ENCODE measurements at regions of chr1 and their contacts with region 1.

Region 1: DNA sequence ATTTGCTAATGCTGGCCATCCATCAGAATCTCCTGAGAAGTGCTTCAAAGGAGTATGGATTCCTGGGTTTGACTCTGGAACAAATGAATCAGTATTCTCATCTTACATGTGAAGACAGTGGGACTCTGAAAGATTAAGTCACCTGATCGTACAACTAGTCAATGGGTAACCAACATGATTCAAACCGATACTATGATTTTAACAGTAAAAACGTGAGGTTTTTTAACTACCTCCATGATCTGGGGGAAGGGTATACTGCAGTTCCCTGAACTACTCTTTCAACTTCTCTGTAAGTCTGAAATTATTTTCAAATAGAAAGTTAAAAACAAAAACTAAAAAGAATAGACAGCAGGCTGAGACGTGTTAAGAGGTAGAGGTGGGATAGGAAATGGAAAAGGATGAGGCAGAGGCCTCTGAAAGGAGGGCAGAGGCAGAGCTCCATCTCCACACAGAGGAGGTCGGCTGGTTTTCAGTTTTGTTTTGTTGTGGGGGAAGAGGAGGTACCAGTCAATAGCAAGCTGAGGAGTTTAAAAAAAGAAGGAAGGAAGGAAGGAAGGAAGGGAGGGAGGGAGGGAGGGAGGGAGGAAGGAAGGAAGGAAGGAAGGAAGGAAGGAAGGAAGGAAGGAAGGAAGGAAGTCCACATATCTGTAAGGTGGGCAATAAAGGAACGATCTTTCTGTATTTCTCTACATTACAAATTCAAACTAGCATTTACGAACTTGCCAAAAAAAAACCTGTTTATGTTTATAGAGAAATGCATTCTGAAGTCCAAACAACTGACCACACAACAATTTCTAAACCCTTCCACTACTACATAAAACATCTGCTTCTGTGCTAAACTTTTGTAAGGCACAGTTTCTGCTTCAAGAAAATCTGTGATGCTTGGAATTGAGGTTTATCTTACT is 213.1 kb downstream of the RERE start:
- DNase-seq: peak; percentile 70
- ATAC-seq: peak; percentile 89
- H3K4me3 Mint-ChIP-seq: peak overlapping the region; percentile 66
- H3K27ac Mint-ChIP-seq: peak overlapping the region; percentile 94
- H3K4me1 Mint-ChIP-seq: peaks cover 56% of the 10 kb centered on the region
- H3K27me3 Mint-ChIP-seq: no peaks in the 10 kb centered on the region

Region 2: GRCh38 chr1:8097077-8097799 is 507.1 kb before region 1 on chr1:
- CTCF ChIA-PET with region 1: no interaction called
- POLR2A ChIA-PET with region 1: no interaction called
- intact Hi-C with region 1: loop called in 1 of 2 experiments (anchors 2 kb)
- DNase-seq: peak; percentile 47
- ATAC-seq: peak; percentile 91
- H3K4me3 Mint-ChIP-seq: peak overlapping the region; percentile 59
- H3K27ac Mint-ChIP-seq: peak overlapping the region; percentile 96
- H3K4me1 Mint-ChIP-seq: peaks cover 40% of the 10 kb centered on the region
- H3K27me3 Mint-ChIP-seq: peaks cover 11% of the 10 kb centered on the region

Region 3: GRCh38 chr1:8540261-8540941 is 63.9 kb before region 1 on chr1:
- CTCF ChIA-PET with region 1: no interaction called
- POLR2A ChIA-PET with region 1: no interaction called
- intact Hi-C with region 1: loop called in 1 of 2 experiments (anchors 1 kb)
- DNase-seq: no peak
- ATAC-seq: peak; percentile 84
- H3K4me3 Mint-ChIP-seq: no peak overlapping the region
- H3K27ac Mint-ChIP-seq: peak overlapping the region; percentile 80
- H3K4me1 Mint-ChIP-seq: peaks cover 32% of the 10 kb centered on the region
- H3K27me3 Mint-ChIP-seq: no peaks in the 10 kb centered on the region

Region 4: GRCh38 chr1:8649027-8649426 is 44.7 kb after region 1 on chr1:
- CTCF ChIA-PET with region 1: interaction called, 3 read pairs
- POLR2A ChIA-PET with region 1: no interaction called
- intact Hi-C with region 1: loop called (anchors 1 to 2 kb)
- DNase-seq: peak; percentile 22
- ATAC-seq: peak; percentile 85
- H3K4me3 Mint-ChIP-seq: no peak overlapping the region
- H3K27ac Mint-ChIP-seq: peak overlapping the region; percentile 37
- H3K4me1 Mint-ChIP-seq: peaks cover 50% of the 10 kb centered on the region
- H3K27me3 Mint-ChIP-seq: no peaks in the 10 kb centered on the region

Region 5: DNA sequence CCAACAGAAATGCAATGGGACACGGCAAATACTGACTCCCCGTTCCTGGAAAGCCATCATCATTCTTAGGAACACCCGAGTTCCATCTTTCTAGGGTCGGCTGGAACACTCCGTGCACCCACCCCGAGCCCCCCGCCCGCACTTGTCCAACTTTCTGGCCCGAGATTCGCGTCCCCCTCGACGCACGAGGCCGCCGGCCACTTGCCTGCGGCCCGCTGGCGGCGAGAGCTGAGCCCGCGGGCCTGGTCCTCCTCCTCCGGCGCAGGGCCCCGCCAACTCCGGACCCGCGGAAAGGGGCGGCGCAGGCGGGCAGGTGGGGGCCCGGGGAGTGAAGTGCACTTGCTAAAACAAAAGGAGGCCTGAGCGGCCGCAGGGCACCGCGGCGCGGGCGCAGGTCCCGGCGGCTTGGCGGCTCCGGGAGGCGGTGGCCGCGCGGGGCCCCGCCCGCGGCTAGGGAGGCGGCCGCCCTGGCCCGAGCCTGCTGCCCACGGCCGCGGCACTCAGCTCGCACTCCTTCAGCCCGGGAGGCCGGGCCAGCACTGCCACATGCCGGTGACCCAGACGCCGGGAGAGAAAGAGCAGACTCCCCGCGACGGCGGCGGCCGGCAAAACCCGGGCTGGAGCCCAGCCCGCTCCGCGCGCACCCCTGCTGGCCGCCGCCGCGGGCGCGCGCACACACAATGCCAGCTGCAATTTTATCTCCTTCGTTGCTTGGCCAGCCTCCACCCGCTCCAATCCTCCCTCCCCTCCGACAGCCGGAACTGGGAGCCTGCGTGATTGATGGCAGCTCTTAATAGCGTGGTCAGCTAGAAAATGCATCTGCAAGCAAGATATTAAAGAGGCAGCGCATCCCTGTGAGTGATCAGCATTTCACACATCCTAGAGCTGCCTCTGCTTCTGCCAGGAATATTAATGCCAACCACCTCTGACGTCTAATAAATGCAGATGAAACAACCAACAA is 98.8 kb after region 1 on chr1:
- CTCF ChIA-PET with region 1: interaction called, 3 read pairs
- POLR2A ChIA-PET with region 1: interaction called, 4 read pairs
- intact Hi-C with region 1: loop called (anchors 1 to 5 kb)
- DNase-seq: peak; percentile 85
- ATAC-seq: peak; percentile 45
- H3K4me3 Mint-ChIP-seq: peak overlapping the region; percentile 83
- H3K27ac Mint-ChIP-seq: peak overlapping the region; percentile 76
- H3K4me1 Mint-ChIP-seq: peaks cover 32% of the 10 kb centered on the region
- H3K27me3 Mint-ChIP-seq: peaks cover 31% of the 10 kb centered on the region